Heart right ventricle (tissue), 16 donors: ENCODE measurements at regions of chr21 and their contacts with region 1.

Region 1: GRCh38 chr21:33641336-33642026 is at the start of gene CRYZL1:
- DNase-seq: peak; percentile 100
- ATAC-seq: peak; percentile 89 to 95 (median 94)
- H3K4me3 ChIP-seq: peak within 1 kb of the TSS; percentile 66 to 96 (median 88)
- H3K27ac ChIP-seq: peak within 1 kb of the TSS; percentile 78 to 93 (median 86)
- H3K4me1 ChIP-seq: peaks cover 3 to 42% (median 25%) of the 10 kb centered on the region in 9 donors
- H3K27me3 ChIP-seq: no peaks in the 10 kb centered on the region
- CTCF ChIP-seq: no peak
- total RNA-seq, gene CRYZL1: 19.0 to 29.8 (median 26.0) TPM

Region 2: DNA sequence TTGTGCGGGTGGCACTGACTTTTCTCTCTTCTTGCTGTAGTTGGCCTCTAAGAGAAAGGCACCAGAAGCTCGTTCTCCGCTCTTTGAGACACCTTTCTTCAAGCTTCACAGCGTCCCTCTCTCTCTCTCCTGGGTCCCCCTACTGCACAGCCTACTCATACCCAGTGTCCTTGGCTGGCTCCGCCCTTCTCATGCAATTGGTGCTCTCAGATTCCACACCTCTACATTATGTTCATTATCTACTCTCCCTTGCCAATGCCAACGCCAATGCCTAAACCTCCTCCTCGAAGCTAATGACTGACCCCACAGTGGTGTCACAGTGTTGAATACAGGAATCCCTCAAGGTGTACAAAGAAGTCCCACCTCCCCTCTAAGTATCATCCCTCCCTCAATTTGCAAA is 145.1 kb before region 1 on chr21:
- intact Hi-C with region 1: no loop called
- DNase-seq: no peak
- ATAC-seq: no peak
- H3K4me3 ChIP-seq: no peak overlapping the region
- H3K27ac ChIP-seq: no peak overlapping the region
- H3K4me1 ChIP-seq: peaks cover 0 to 7% (median 5%) of the 10 kb centered on the region in 9 donors
- H3K27me3 ChIP-seq: no peaks in the 10 kb centered on the region
- CTCF ChIP-seq: no peak

Region 3: GRCh38 chr21:33572350-33572749 is 69.1 kb before region 1 on chr21:
- intact Hi-C with region 1: no loop called
- DNase-seq: no peak
- ATAC-seq: peak in 3 of 8 donors; percentile 35 to 63 (median 41)
- H3K4me3 ChIP-seq: no peak overlapping the region
- H3K27ac ChIP-seq: no peak overlapping the region
- H3K4me1 ChIP-seq: peaks cover 0 to 16% (median 4%) of the 10 kb centered on the region in 9 donors
- H3K27me3 ChIP-seq: no peaks in the 10 kb centered on the region
- CTCF ChIP-seq: no peak

Region 4: DNA sequence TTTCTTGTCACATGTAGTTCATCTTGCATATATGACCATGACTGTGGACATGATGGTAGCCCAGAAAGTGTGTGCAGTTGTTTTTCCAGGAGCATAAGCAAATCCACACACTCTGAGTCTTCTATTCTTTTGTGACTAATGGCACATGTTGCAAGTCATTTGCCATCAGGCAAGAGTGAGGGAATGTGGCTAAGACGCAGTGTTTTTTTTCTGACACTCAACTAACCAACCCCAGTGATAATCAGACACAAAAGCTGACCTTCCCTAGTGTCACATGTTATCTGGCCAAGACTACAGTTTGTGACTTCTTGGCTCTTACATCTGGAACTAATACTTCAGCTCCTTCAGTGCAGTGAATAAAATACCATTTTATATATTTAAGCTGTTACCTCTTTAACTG is 109.6 kb after region 1 on chr21:
- intact Hi-C with region 1: loop called in 5 of 10 experiments (anchors 5 to 10 kb)
- DNase-seq: no peak
- ATAC-seq: peak in 6 of 8 donors; percentile 20 to 60 (median 36)
- H3K4me3 ChIP-seq: no peak overlapping the region
- H3K27ac ChIP-seq: peak overlapping the region in 5 of 10 donors; percentile 17 to 58 (median 44)
- H3K4me1 ChIP-seq: peaks cover 0 to 38% (median 22%) of the 10 kb centered on the region in 9 donors
- H3K27me3 ChIP-seq: no peaks in the 10 kb centered on the region
- CTCF ChIP-seq: no peak

Region 5: DNA sequence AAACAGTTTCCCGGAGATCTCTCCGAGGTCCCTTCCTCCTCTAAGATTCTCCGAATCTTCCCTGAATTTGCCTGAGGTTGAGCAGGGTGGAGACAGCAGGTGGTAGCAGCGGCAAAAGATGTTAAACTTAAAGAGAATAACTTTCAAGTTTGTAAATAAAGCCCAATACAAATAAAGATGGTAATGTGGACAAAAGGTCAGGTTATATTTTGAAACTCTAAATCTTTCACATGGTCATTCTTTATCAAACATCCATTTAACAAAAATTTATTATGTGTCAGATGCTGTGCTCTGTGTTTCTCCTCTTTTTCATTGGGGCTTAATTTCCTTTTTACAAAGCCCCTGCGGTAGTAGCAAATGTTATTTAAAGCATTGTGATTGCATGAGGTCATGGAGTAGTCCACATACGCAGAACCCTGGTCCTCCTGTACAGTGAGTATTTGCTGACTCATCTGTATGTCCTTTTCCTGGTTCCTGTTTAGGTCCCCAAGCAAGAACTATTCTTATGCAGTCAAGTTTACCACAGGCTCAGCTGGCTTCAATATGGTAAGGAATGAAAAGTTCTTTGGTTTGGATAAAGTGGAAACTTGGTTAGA is 120.1 kb after region 1 on chr21:
- intact Hi-C with region 1: loop called in 4 of 10 experiments (anchors 5 to 10 kb)
- DNase-seq: peak in 1 of 2 donors; percentile 34
- ATAC-seq: peak; percentile 80 to 96 (median 94)
- H3K4me3 ChIP-seq: peak overlapping the region in 6 of 10 donors; percentile 0 to 22 (median 10)
- H3K27ac ChIP-seq: peak overlapping the region in 9 of 10 donors; percentile 20 to 82 (median 62)
- H3K4me1 ChIP-seq: peaks cover 0 to 29% (median 14%) of the 10 kb centered on the region in 9 donors
- H3K27me3 ChIP-seq: no peaks in the 10 kb centered on the region
- CTCF ChIP-seq: no peak

Region 6: DNA sequence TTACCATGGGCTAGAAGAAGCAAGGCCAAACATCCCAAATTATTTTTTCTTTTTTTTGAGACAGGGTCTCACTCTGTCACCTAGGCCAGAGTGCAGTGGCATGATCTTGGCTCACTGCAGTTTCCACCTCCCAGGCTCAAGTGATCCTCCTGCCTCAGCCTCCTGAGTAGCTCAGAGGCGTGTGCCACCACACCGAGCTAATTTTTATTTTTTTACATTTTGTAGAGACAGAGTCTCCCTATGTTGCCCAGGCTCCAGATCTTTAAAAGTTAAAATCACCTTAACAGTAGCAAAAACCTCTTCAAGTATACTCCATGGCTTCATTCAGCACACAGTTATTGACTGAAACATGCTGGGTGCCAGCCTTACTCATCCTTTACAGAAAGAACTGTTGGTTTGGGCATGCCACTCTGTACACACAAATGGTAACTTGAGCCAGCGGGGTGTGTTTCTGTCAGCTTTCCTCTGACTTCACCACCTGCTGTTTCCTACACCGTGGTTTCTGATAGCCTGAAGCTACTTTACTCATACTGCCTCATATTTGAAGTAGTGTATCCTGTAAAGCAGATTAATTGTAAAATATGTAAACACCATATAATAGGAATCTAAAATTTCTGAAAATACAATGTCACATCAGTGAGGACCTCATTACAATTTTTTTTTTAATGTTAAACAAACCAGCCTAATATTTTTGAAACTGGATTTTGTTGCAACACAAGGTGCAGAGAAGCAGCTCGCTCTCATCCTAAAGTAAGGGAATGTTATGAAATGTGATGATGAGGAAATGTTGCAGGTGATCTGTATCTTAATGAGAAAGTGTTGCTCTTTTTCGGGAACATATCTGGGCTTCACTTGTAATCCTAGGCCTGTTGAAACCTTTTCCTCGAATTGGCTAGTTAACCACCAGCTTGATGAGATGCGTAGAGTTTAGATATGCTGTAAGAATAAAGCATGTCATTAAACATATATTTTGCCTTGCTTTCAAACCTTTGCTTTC is 160.2 kb after region 1 on chr21:
- intact Hi-C with region 1: loop called in 1 of 10 experiments (anchors 10 kb)
- DNase-seq: no peak
- ATAC-seq: peak in 1 of 8 donors; percentile 23
- H3K4me3 ChIP-seq: no peak overlapping the region
- H3K27ac ChIP-seq: peak overlapping the region in 5 of 10 donors; percentile 1 to 41 (median 26)
- H3K4me1 ChIP-seq: peaks cover 0 to 38% (median 7%) of the 10 kb centered on the region in 9 donors
- H3K27me3 ChIP-seq: no peaks in the 10 kb centered on the region
- CTCF ChIP-seq: no peak

Region 7: GRCh38 chr21:33817663-33818451 is 176.4 kb after region 1 on chr21:
- intact Hi-C with region 1: loop called in 1 of 10 experiments (anchors 10 kb)
- DNase-seq: no peak
- ATAC-seq: peak in 1 of 8 donors; percentile 42
- H3K4me3 ChIP-seq: no peak overlapping the region
- H3K27ac ChIP-seq: peak overlapping the region in 1 of 10 donors; percentile 52
- H3K4me1 ChIP-seq: peaks cover 0 to 36% (median 0%) of the 10 kb centered on the region in 9 donors
- H3K27me3 ChIP-seq: no peaks in the 10 kb centered on the region
- CTCF ChIP-seq: no peak

Region 8: DNA sequence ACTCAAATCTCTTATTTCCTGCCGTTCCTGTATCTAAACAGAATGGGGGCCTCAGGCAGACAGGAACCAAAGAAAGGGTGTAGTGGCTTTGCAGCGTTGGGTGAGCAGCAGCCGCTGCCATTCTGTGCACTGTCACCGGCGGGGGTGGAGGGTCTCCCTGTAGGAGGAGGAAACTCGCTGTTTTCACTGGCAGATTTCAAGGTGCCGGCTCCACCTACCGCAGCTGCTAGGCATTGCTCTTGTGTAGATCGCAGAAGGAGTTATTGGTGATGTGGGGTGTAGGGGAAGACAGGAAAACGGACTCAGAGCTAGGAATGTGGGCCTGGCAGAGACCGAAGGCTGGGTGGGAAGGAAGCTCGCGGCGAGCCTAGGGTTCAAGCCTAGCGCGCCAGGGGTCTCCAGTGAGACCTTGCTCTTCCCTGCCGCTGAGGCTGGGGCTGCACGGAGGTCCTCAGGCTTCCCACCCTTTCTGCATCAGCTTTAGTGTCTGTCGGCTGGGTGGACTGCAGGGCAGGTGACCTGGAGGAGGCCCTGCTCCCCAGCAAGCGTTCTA is 253.3 kb after region 1 on chr21:
- intact Hi-C with region 1: loop called in 8 of 10 experiments (anchors 5 to 10 kb)
- DNase-seq: peak; percentile 73 to 81
- ATAC-seq: peak; percentile 79 to 94 (median 92)
- H3K4me3 ChIP-seq: peak overlapping the region in 8 of 10 donors; percentile 27 to 51 (median 38)
- H3K27ac ChIP-seq: peak overlapping the region in 1 of 10 donors; percentile 13
- H3K4me1 ChIP-seq: peaks cover 0 to 18% (median 8%) of the 10 kb centered on the region in 9 donors
- H3K27me3 ChIP-seq: no peaks in the 10 kb centered on the region
- CTCF ChIP-seq: peak; percentile 27 to 76 (median 61)

Region 9: GRCh38 chr21:33901412-33902288 is 260.2 kb after region 1 on chr21:
- intact Hi-C with region 1: loop called in 5 of 10 experiments (anchors 5 to 10 kb)
- DNase-seq: peak in 1 of 2 donors; percentile 26
- ATAC-seq: peak; percentile 53 to 71 (median 68)
- H3K4me3 ChIP-seq: no peak overlapping the region
- H3K27ac ChIP-seq: peak overlapping the region in 1 of 10 donors; percentile 29
- H3K4me1 ChIP-seq: peaks cover 0 to 9% (median 0%) of the 10 kb centered on the region in 9 donors
- H3K27me3 ChIP-seq: no peaks in the 10 kb centered on the region
- CTCF ChIP-seq: peak in 8 of 9 donors; percentile 15 to 59 (median 46)